ENCODE measurements at regions of chr10 and their contacts with region 1.

Region 1: GRCh38 chr10:13882112-13882711 is 295.4 kb downstream of the PRPF18 start:
- DNase-seq: peak; percentile 96
- H3K4me3 ChIP-seq: no peak overlapping the region
- H3K27ac ChIP-seq: peak overlapping the region; percentile 99
- H3K4me1 ChIP-seq: peaks cover 71% of the 10 kb centered on the region
- H3K27me3 ChIP-seq: no peaks in the 10 kb centered on the region
- CTCF ChIP-seq: no peak
- POLR2A ChIP-seq: peak; percentile 68

Region 2: GRCh38 chr10:13815756-13816155 is 66.5 kb before region 1 on chr10:
- CTCF ChIA-PET with region 1: no interaction called
- POLR2A ChIA-PET with region 1: interaction called, 3 read pairs
- dilution Hi-C with region 1: no loop called
- intact Hi-C with region 1: loop called (anchors 2 kb)
- DNase-seq: peak; percentile 77
- H3K4me3 ChIP-seq: no peak overlapping the region
- H3K27ac ChIP-seq: peak overlapping the region; percentile 19
- H3K4me1 ChIP-seq: peaks cover 49% of the 10 kb centered on the region
- H3K27me3 ChIP-seq: no peaks in the 10 kb centered on the region
- CTCF ChIP-seq: no peak
- POLR2A ChIP-seq: no peak

Region 3: GRCh38 chr10:13853854-13854253 is 28.4 kb before region 1 on chr10:
- CTCF ChIA-PET with region 1: interaction called, 3 read pairs
- POLR2A ChIA-PET with region 1: no interaction called
- dilution Hi-C with region 1: no loop called
- intact Hi-C with region 1: loop called (anchors 1 kb)
- DNase-seq: peak; percentile 73
- H3K4me3 ChIP-seq: no peak overlapping the region
- H3K27ac ChIP-seq: peak overlapping the region; percentile 37
- H3K4me1 ChIP-seq: peaks cover 50% of the 10 kb centered on the region
- H3K27me3 ChIP-seq: no peaks in the 10 kb centered on the region
- CTCF ChIP-seq: no peak
- POLR2A ChIP-seq: no peak

Region 4: DNA sequence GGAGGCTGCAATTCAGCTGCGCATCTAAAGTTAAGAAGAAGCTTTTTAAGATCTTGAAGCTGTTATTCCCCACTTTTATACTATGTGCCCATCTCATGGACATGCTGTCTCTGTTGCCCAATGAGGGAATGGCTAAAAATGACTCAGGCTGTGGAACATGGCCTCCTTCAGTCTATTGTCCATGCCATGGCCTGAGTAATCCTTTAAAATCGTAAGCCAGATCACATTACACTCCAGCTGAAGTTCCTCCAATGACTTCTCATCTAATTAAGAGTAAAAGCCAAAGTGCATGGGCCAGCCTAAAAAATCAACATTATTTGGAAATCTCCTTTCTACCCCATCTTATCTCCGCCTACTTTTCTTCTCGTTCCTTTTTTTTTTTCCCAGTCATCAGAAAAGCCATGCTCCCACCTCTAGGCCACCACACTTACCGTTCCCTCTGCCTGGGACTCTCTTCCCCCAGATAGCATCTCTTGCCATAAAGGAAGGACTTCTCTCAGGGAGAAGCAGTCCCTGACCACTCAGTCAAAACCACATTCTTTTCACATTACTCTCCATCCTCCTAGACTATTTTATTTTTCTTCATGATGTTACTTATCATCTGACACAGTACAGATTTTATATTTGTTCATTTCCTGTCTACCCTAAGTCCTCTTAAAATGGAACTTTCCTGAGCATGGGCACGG is 42.0 kb after region 1 on chr10:
- CTCF ChIA-PET with region 1: interaction called, 3 read pairs
- POLR2A ChIA-PET with region 1: no interaction called
- dilution Hi-C with region 1: no loop called
- intact Hi-C with region 1: loop called (anchors 5 kb)
- DNase-seq: peak; percentile 74
- H3K4me3 ChIP-seq: no peak overlapping the region
- H3K27ac ChIP-seq: peak overlapping the region; percentile 87
- H3K4me1 ChIP-seq: peaks cover 24% of the 10 kb centered on the region
- H3K27me3 ChIP-seq: no peaks in the 10 kb centered on the region
- CTCF ChIP-seq: no peak
- POLR2A ChIP-seq: peak; percentile 45

Region 5: GRCh38 chr10:13987446-13987845 is 105.2 kb after region 1 on chr10:
- CTCF ChIA-PET with region 1: interaction called, 3 read pairs
- POLR2A ChIA-PET with region 1: no interaction called
- dilution Hi-C with region 1: no loop called
- intact Hi-C with region 1: loop called (anchors 1 kb)
- DNase-seq: peak; percentile 73
- H3K4me3 ChIP-seq: no peak overlapping the region
- H3K27ac ChIP-seq: peak overlapping the region; percentile 71
- H3K4me1 ChIP-seq: peaks cover 76% of the 10 kb centered on the region
- H3K27me3 ChIP-seq: no peaks in the 10 kb centered on the region
- CTCF ChIP-seq: no peak
- POLR2A ChIP-seq: no peak

Region 6: DNA sequence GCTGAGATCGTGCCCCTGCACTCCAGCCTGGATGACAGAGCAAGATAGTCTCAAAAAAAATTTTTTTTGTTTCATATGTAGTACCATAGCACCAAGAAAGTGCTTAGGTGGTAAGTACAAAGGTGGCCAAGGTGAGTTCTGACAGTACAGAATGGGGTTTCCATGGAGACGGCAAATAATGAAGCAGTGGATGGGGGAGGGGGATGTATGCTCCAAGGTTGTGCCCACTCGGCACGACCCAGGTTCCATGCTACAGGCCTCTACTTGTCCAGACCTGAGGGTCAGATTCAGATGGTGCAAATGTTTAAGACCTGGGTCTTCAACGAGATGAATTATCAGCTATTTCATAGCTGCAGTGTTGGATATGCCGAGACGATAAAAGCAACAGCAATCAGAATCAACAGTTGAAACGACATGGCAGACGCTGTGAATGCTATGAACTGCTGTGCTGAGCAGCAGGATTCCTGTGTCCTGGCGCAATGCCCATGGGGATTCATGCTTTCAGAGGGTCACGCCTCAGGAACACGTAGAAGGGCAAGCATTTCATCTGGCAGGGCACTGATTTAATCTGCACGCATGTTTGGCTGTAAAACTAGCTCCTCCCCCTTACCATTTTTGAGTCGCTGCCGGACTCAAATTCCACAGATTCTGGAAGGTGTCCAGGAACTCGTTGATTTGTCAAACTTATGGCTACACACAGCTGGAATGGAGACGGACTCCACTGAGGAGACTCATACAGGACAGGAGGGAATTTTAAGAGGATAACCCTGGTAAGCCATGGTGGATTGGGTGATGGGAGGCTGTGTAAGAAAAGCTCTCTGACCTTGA is 192.1 kb after region 1 on chr10:
- CTCF ChIA-PET with region 1: interaction called, 4 read pairs
- POLR2A ChIA-PET with region 1: no interaction called
- dilution Hi-C with region 1: no loop called
- intact Hi-C with region 1: loop called (anchors 1 kb)
- DNase-seq: peak; percentile 98
- H3K4me3 ChIP-seq: no peak overlapping the region
- H3K27ac ChIP-seq: peak overlapping the region; percentile 81
- H3K4me1 ChIP-seq: peaks cover 43% of the 10 kb centered on the region
- H3K27me3 ChIP-seq: no peaks in the 10 kb centered on the region
- CTCF ChIP-seq: no peak
- POLR2A ChIP-seq: no peak

Region 7: DNA sequence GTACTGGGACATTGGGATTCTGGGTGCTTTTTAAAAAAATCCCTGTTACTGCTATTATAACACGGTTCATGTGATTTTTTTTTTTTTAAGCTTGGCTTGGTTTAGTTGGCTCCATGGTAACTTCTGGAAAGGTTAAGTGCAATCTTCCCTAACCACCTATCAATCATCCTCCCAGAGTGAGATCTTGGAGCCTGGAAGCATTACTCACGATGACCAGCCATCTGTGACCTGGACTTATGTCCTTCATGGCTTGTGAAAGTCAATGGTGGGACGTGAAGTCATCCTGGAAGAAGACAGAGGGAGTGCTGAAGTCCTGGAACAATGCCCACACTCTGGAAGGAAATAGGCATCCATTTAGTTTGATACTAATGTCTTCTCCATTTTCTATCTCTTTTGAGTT is 584.0 kb after region 1 on chr10:
- CTCF ChIA-PET with region 1: no interaction called
- POLR2A ChIA-PET with region 1: no interaction called
- dilution Hi-C with region 1: no loop called
- intact Hi-C with region 1: no loop called
- DNase-seq: no peak
- H3K4me3 ChIP-seq: no peak overlapping the region
- H3K27ac ChIP-seq: no peak overlapping the region
- H3K4me1 ChIP-seq: no peaks in the 10 kb centered on the region
- H3K27me3 ChIP-seq: peaks cover 19 to 26% of the 10 kb centered on the region in 2 experiments
- CTCF ChIP-seq: no peak
- POLR2A ChIP-seq: no peak